HepG2 (cell line): ENCODE measurements at regions of chr5 and their contacts with region 1.

Region 1: GRCh38 chr5:90434116-90434714 is 24.7 kb upstream of the CETN3 start:
- DNase-seq: peak; percentile 39
- ATAC-seq: peak; percentile 97
- H3K4me3 ChIP-seq: no peak overlapping the region
- H3K27ac ChIP-seq: no peak overlapping the region
- H3K4me1 ChIP-seq: no peaks in the 10 kb centered on the region
- H3K27me3 ChIP-seq: no peaks in the 10 kb centered on the region
- CTCF ChIP-seq: peak; percentile 82
- EP300 ChIP-seq: no peak
- POLR2A ChIP-seq: no peak
- RAD21 ChIP-seq: peak; percentile 40; the same call in 1 of the 2 replicates

Region 2: GRCh38 chr5:88729084-88729828 is 1705.0 kb before region 1 on chr5:
- CTCF ChIA-PET with region 1: interaction called, 7 read pairs
- POLR2A ChIA-PET with region 1: no interaction called
- in situ Hi-C with region 1: no loop called
- intact Hi-C with region 1: loop called (anchors 2 kb)
- DNase-seq: peak; percentile 61
- ATAC-seq: peak; percentile 81
- H3K4me3 ChIP-seq: no peak overlapping the region
- H3K27ac ChIP-seq: no peak overlapping the region
- H3K4me1 ChIP-seq: no peaks in the 10 kb centered on the region
- H3K27me3 ChIP-seq: peaks cover 0 to 6% of the 10 kb centered on the region in 2 experiments; a peak in 1 of 5 replicates
- CTCF ChIP-seq: peak; percentile 70
- EP300 ChIP-seq: no peak
- POLR2A ChIP-seq: no peak
- RAD21 ChIP-seq: peak; percentile 47; the same call in 1 of the 2 replicates

Region 3: DNA sequence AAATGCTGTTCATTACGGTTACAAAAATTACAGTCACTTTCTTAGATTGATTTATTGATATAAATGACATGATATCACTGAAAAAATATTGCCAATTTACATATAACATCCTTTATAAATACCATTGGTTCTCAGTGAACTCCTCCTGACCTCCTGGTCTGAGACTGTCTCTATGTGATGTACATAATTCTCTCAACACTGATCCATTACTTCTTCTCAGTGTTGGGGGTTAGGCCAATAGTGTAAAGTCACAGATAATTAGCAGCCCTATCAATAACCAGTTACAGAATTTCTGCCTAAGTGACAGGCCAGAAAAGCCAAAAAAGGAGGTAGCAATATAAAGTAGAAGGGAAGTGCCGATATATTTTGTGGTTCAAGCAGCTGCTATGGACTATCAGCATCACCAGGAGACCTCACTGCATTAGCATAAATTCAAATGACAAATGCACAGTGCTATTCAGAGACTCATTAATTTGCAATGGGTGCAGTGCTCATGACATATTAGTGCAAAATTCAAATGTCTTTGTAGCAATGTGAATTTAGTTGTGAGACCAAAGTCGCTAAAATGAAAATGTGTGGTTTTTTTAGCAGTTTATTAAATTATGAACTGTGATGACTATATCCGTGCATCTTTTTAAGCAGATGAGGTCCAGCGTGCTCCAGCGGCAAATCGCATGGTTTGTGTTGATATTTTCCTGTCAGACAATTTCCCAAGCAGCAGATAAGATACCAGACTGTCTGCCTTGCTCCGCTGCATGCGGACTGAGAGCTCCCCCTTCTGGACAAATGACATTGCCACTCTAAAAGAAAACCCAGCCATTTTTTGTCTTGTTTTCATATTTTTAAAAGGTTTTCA is 169.3 kb before region 1 on chr5:
- CTCF ChIA-PET with region 1: no interaction called
- POLR2A ChIA-PET with region 1: no interaction called
- in situ Hi-C with region 1: no loop called
- intact Hi-C with region 1: loop called (anchors 1 kb)
- DNase-seq: peak; percentile 35
- ATAC-seq: peak; percentile 77
- H3K4me3 ChIP-seq: no peak overlapping the region
- H3K27ac ChIP-seq: no peak overlapping the region
- H3K4me1 ChIP-seq: no peaks in the 10 kb centered on the region
- H3K27me3 ChIP-seq: no peaks in the 10 kb centered on the region; a peak in 1 of 5 replicates
- CTCF ChIP-seq: peak; percentile 78
- EP300 ChIP-seq: no peak
- POLR2A ChIP-seq: no peak
- RAD21 ChIP-seq: peak; percentile 69

Region 4: GRCh38 chr5:90474235-90475109 is 40.3 kb after region 1 on chr5 and contains the starts of genes MBLAC2 and POLR3G:
- CTCF ChIA-PET with region 1: no interaction called
- POLR2A ChIA-PET with region 1: no interaction called
- in situ Hi-C with region 1: no loop called
- intact Hi-C with region 1: loop called (anchors 2 kb)
- DNase-seq: peak; percentile 86
- ATAC-seq: peak; percentile 91
- H3K4me3 ChIP-seq: peak within 1 kb of the TSS; percentile 68 to 83 (median 81)
- H3K27ac ChIP-seq: peak within 1 kb of the TSS; percentile 94
- H3K4me1 ChIP-seq: peaks cover 43% of the 10 kb centered on the region
- H3K27me3 ChIP-seq: no peaks in the 10 kb centered on the region
- CTCF ChIP-seq: peak; percentile 63
- EP300 ChIP-seq: 0 out of 4 replicates have a peak, but pooled peaks of 1 of the 2 experiments have one; percentile 30
- POLR2A ChIP-seq: peak; percentile 88 to 89
- RAD21 ChIP-seq: peak; percentile 22; the same call in 1 of the 2 replicates
- total RNA-seq, gene MBLAC2: 4.1 and 5.7 TPM in 2 replicates
- total RNA-seq, gene POLR3G: 7.3 and 11.2 TPM in 2 replicates

Region 5: GRCh38 chr5:90529194-90529938 is 95.2 kb after region 1 on chr5 and contains the start of gene LYSMD3:
- CTCF ChIA-PET with region 1: interaction called, 35 read pairs
- POLR2A ChIA-PET with region 1: no interaction called
- in situ Hi-C with region 1: loop called (anchors 10 kb)
- intact Hi-C with region 1: loop called (anchors 1 kb)
- DNase-seq: peak; percentile 92
- ATAC-seq: peak; percentile 96
- H3K4me3 ChIP-seq: peak within 1 kb of the TSS; percentile 87 to 99 (median 97)
- H3K27ac ChIP-seq: peak within 1 kb of the TSS; percentile 82
- H3K4me1 ChIP-seq: peaks cover 30% of the 10 kb centered on the region
- H3K27me3 ChIP-seq: peaks cover 0 to 4% of the 10 kb centered on the region in 2 experiments; a peak in 1 of 5 replicates
- CTCF ChIP-seq: no peak
- EP300 ChIP-seq: no peak; a peak in 1 of 4 replicates
- POLR2A ChIP-seq: peak; percentile 72 to 92; a peak in 3 of 4 replicates
- RAD21 ChIP-seq: peak; percentile 40; the same call in 1 of the 2 replicates
- total RNA-seq, gene LYSMD3: 13.8 and 22.2 TPM in 2 replicates

Region 6: DNA sequence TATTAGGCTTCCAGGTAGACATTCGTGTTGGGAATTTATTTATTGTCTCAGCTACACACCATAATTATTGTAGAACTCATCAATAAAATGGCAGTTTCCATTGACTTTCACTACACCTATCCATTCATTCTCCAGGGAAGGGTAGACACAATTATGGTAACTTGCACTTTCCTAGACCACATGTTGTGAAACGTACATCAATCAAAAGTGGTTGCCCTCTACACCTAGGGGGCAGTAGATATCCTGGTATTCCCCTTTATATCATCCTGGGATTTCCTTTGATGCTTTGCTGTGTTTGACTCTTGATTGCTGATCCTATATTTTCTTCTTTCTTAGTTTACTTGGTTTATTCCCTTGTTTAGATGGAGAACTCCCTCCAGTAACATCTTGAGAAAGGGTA is 172.3 kb after region 1 on chr5:
- CTCF ChIA-PET with region 1: interaction called, 4 read pairs
- POLR2A ChIA-PET with region 1: no interaction called
- in situ Hi-C with region 1: loop called (anchors 10 kb)
- intact Hi-C with region 1: loop called (anchors 1 kb)
- DNase-seq: peak; percentile 14
- ATAC-seq: peak; percentile 51
- H3K4me3 ChIP-seq: no peak overlapping the region
- H3K27ac ChIP-seq: no peak overlapping the region
- H3K4me1 ChIP-seq: no peaks in the 10 kb centered on the region
- H3K27me3 ChIP-seq: no peaks in the 10 kb centered on the region
- CTCF ChIP-seq: peak; percentile 29; the same call in 1 of the 2 replicates
- EP300 ChIP-seq: no peak
- POLR2A ChIP-seq: no peak
- RAD21 ChIP-seq: no peak

Region 7: DNA sequence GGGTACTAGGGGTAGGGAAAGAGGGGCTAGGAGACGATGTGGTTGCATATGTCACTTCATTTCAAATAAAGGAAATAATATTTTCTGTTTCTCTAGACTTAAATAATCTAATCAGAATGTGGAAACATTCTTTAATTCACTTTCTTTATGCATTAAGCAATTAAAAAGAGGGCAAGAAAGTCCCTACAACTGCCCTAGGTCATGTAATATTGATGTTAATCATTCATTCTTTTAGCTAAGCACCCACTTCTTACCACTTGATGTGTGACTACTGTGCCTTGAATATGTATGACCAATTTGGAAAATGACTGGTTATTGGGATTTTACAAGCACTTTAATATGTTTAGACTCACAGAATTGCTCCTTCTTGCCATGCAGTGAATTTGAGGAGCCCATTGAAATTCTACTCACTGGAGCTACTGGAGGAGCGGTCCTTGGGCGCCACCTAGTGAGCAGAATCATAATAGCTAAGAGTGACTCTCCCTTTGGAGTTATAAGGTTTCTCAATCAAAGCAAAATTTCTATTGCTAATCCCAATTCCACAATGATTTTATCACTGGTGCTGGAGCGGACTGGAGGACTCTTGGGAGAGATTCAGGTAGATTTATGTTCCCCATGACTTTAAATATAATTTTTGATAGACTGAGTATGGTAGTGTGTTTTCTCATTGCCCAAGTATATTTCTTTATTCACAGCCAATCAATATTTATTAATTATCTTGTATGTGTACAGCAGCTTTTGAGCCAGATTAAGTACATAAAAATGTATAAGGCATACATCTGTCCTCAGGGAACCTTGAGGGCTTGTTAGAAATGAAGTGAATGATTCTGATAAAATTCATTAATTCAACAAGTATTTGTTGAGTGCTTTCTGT is 349.5 kb after region 1 on chr5:
- CTCF ChIA-PET with region 1: interaction called, 10 read pairs
- POLR2A ChIA-PET with region 1: no interaction called
- in situ Hi-C with region 1: no loop called
- intact Hi-C with region 1: loop called (anchors 1 kb)
- DNase-seq: peak; percentile 44
- ATAC-seq: peak; percentile 88
- H3K4me3 ChIP-seq: no peak overlapping the region
- H3K27ac ChIP-seq: no peak overlapping the region
- H3K4me1 ChIP-seq: no peaks in the 10 kb centered on the region
- H3K27me3 ChIP-seq: no peaks in the 10 kb centered on the region
- CTCF ChIP-seq: peak; percentile 77
- EP300 ChIP-seq: no peak
- POLR2A ChIP-seq: no peak
- RAD21 ChIP-seq: 0 out of 2 replicates have a peak, but pooled peaks have one; percentile 23